ENCODE measurements at regions of chr4 and their contacts with region 1.

Region 1: DNA sequence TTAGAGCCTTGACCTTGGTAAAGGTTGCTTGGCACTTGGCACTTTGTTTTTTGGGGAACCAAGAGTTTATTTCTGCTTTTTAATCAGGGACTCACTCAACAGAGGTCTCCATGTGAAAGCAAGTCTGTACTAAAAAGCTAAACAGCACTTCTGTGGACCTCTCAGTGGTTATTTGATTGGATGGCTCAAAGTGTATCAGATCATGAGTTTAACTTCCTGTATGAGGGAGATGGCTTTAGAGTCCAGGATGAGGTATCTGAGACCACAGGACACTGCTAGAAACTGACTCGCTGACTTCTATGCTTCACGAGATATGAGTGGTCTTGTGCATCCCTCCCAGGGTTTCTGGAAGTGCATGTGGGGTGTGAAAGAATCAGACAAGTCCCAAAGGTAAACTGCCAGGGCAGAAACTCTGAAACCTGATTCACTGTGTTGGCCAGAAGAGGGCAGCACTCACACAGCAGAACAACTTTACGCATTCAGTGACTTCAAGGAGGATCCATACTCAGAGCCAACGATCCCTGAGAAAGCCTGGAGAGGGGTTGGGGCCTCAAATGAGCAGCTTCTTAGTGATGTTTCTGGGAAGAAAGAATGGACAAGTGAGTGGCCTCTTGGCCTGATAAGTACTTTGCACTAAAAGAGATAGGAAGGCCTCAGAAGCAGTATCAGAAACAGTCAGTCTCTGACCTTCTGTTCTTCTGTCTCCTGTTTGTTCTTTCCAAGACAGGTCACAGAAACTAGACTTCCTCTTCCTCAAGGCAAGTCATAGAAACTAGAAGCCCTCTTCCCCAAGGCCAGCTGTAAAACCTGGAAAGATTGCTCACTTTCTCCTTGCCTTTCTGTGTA is 220.3 kb upstream of the CXCL13 start:
- DNase-seq: peak; percentile 64
- H3K4me3 ChIP-seq: no peak overlapping the region
- H3K27ac ChIP-seq: no peak overlapping the region
- H3K4me1 ChIP-seq: no peaks in the 10 kb centered on the region
- H3K27me3 ChIP-seq: no peaks in the 10 kb centered on the region
- CTCF ChIP-seq: peak; percentile 80

Region 2: DNA sequence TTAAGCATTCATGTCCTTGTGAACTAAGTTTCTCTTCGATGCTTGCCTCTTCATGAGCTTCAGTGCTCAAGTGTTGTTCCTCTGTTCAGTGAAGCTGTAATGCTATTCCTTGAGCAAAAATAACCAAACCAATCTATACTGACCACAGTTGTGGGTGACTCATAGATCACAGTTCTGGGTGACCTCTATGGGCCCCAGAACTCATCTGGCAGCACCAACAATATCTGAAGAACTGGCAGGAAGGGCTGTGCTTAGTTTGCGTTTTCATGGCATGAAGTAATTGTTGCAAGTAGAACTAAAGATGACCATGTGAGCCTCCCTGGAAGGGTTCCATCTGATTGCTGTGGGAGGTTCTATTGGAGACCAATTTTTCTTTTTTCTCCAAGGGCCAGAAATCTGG is 122.1 kb before region 1 on chr4:
- intact Hi-C with region 1: no loop called
- DNase-seq: no peak
- H3K4me3 ChIP-seq: no peak overlapping the region
- H3K27ac ChIP-seq: no peak overlapping the region
- H3K4me1 ChIP-seq: no peaks in the 10 kb centered on the region
- H3K27me3 ChIP-seq: no peaks in the 10 kb centered on the region
- CTCF ChIP-seq: no peak

Region 3: GRCh38 chr4:77433418-77433733 is 48.0 kb after region 1 on chr4:
- intact Hi-C with region 1: loop called (anchors 5 kb)
- DNase-seq: peak; percentile 22
- H3K4me3 ChIP-seq: no peak overlapping the region
- H3K27ac ChIP-seq: no peak overlapping the region
- H3K4me1 ChIP-seq: no peaks in the 10 kb centered on the region
- H3K27me3 ChIP-seq: no peaks in the 10 kb centered on the region
- CTCF ChIP-seq: peak; percentile 46